Activated CD4-positive, alpha-beta T cell treated with anti-CD3 and anti-CD28 coated beads for 36 hours (primary cell): ENCODE measurements at regions of chr9 and their contacts with region 1.

Region 1: DNA sequence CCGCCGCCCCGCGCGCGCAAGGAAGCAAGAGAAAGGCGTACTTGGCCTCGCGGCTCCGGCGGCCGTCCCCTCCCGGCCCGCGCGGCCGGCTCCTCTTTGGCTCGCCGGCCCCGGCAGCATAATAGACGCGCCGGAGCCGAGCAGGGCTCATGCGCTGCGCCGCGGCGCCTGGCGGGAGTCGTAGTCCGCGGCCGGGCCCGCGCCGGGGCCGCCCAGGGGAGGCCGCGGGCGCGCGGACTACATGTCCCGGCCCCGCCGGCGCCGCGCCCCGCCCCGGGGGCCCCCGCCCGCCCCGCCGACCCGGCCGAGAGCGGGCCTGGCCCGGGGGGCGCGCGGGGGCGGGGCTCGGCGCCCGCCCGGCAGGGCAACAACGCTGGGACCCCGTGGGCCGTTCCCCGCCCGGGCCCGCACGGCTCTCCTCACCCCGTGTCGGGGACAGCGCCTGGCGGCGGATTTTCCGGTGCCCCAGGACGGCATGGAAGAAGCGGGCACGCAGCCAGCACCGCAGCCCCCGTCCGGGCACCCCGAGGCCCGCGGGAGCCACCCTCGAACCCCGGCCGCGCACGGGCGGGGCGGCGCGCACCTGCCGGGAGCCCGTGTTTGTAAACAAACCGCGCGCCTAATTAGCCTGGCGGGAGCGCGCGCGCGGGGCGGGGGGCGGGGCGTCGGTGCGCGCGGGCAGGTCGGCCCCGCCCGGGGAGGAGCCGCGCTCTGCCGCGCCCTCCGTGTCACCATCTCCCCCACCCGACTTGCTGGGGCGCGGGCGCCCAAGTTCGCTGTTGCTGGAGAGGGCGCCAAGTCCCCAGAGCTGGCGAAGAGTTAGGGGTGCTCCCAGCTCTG is at the start of gene BRD3:
- DNase-seq: peak; percentile 91
- ATAC-seq: peak; percentile 85
- H3K4me3 Mint-ChIP-seq: peak within 1 kb of the TSS; percentile 85
- H3K27ac Mint-ChIP-seq: peak within 1 kb of the TSS; percentile 84
- H3K4me1 Mint-ChIP-seq: peaks cover 28% of the 10 kb centered on the region
- H3K27me3 Mint-ChIP-seq: peaks cover 14% of the 10 kb centered on the region
- total RNA-seq, gene BRD3: 33.8 to 39.2 TPM

Region 2: GRCh38 chr9:133030317-133031129 is 1037.6 kb before region 1 on chr9 and contains the start of gene GTF3C5:
- CTCF ChIA-PET with region 1: interaction called, 3 read pairs
- POLR2A ChIA-PET with region 1: no interaction called
- intact Hi-C with region 1: loop called in 1 of 2 experiments (anchors 1 kb)
- DNase-seq: peak; percentile 95
- ATAC-seq: peak; percentile 98
- H3K4me3 Mint-ChIP-seq: peak within 1 kb of the TSS; percentile 94
- H3K27ac Mint-ChIP-seq: peak within 1 kb of the TSS; percentile 95
- H3K4me1 Mint-ChIP-seq: peaks cover 41% of the 10 kb centered on the region
- H3K27me3 Mint-ChIP-seq: no peaks in the 10 kb centered on the region
- total RNA-seq, gene GTF3C5: 81.3 to 84.5 TPM

Region 3: GRCh38 chr9:133356391-133357091 is 711.6 kb before region 1 on chr9 and contains the starts of genes SURF1 and SURF2:
- CTCF ChIA-PET with region 1: no interaction called
- POLR2A ChIA-PET with region 1: no interaction called
- intact Hi-C with region 1: loop called in 1 of 2 experiments (anchors 10 kb)
- DNase-seq: peak; percentile 96
- ATAC-seq: peak; percentile 84
- H3K4me3 Mint-ChIP-seq: peak within 1 kb of the TSS; percentile 91
- H3K27ac Mint-ChIP-seq: peak within 1 kb of the TSS; percentile 85
- H3K4me1 Mint-ChIP-seq: peaks cover 52% of the 10 kb centered on the region
- H3K27me3 Mint-ChIP-seq: no peaks in the 10 kb centered on the region
- total RNA-seq, gene SURF1: 17.4 to 29.1 TPM
- total RNA-seq, gene SURF2: 17.3 to 21.8 TPM

Region 4: GRCh38 chr9:133992780-133993634 is 75.1 kb before region 1 on chr9:
- CTCF ChIA-PET with region 1: no interaction called
- POLR2A ChIA-PET with region 1: no interaction called
- intact Hi-C with region 1: loop called (anchors 1 to 2 kb)
- DNase-seq: peak; percentile 88
- ATAC-seq: peak; percentile 75
- H3K4me3 Mint-ChIP-seq: peak overlapping the region; percentile 61
- H3K27ac Mint-ChIP-seq: no peak overlapping the region
- H3K4me1 Mint-ChIP-seq: peaks cover 2% of the 10 kb centered on the region
- H3K27me3 Mint-ChIP-seq: peaks cover 3% of the 10 kb centered on the region

Region 5: GRCh38 chr9:134044944-134045343 is 23.2 kb before region 1 on chr9:
- CTCF ChIA-PET with region 1: no interaction called
- POLR2A ChIA-PET with region 1: no interaction called
- intact Hi-C with region 1: no loop called
- DNase-seq: no peak
- ATAC-seq: no peak
- H3K4me3 Mint-ChIP-seq: no peak overlapping the region
- H3K27ac Mint-ChIP-seq: no peak overlapping the region
- H3K4me1 Mint-ChIP-seq: no peaks in the 10 kb centered on the region
- H3K27me3 Mint-ChIP-seq: no peaks in the 10 kb centered on the region

Region 6: DNA sequence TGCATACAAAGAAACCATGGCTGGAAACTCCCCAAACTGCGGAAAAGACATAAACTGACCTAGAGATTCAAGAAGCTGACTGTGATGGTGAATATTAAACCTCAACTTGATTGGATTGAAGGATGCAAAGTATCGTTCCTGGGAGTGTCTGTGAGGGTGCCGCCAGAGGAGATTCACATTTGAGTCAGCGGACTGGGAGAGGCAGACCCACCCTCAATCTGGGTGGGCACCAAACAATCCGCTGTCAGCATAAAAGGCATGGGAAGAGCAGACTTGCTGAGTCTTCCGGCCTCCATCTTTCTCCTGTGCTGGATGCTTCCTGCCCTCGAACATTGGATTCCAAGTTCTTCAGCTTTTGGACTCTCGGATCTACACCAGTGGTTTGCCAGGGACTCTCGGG is 42.9 kb after region 1 on chr9:
- CTCF ChIA-PET with region 1: no interaction called
- POLR2A ChIA-PET with region 1: no interaction called
- intact Hi-C with region 1: no loop called
- DNase-seq: no peak
- ATAC-seq: no peak
- H3K4me3 Mint-ChIP-seq: no peak overlapping the region
- H3K27ac Mint-ChIP-seq: no peak overlapping the region
- H3K4me1 Mint-ChIP-seq: no peaks in the 10 kb centered on the region
- H3K27me3 Mint-ChIP-seq: peaks cover 4% of the 10 kb centered on the region

Region 7: DNA sequence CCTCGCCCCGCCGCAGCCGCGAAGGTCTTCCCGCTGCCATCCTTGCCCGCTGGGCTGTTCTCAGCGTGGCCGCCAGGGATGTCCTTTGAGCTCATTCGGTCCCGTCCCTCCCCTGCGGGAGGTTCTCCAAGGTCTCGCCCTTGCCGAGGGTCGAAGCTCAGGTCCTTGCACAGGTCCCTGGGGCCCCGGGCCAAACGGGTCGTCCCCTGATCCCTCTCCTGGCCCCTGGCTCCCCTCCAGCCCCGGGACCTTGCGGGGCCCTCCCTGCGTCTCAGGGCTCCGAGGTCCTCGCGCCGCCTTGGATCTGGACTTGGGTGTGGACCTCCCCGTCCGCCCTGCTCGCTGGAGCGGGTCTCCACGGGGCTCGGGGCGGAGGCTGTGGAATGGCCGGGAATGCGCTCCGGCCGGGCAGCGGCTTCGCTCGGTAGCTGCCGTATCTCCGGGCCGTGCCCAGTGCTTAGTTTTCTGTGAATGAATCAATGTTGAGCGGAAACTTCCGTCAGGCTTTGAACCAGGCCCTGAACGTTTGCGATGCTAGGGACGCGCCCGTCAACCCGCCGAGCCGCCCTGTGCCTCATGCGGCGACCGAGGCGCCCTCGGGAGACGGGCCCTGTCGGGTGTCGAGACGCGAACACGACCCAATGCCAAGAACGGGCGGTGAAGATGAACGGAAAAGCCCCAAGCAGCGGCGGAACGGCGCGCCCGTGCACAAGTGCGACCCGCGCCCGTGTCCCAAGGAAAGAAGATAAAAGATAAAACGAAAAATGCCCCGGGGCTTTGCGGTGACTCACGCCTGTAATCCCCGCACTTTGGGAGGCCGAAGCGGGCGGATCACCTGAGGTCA is 95.5 kb after region 1 on chr9:
- CTCF ChIA-PET with region 1: interaction called, 3 read pairs
- POLR2A ChIA-PET with region 1: interaction called, 3 read pairs
- intact Hi-C with region 1: loop called (anchors 1 to 2 kb)
- DNase-seq: peak; percentile 83
- ATAC-seq: peak; percentile 39
- H3K4me3 Mint-ChIP-seq: no peak overlapping the region
- H3K27ac Mint-ChIP-seq: no peak overlapping the region
- H3K4me1 Mint-ChIP-seq: peaks cover 2% of the 10 kb centered on the region
- H3K27me3 Mint-ChIP-seq: no peaks in the 10 kb centered on the region

Region 8: DNA sequence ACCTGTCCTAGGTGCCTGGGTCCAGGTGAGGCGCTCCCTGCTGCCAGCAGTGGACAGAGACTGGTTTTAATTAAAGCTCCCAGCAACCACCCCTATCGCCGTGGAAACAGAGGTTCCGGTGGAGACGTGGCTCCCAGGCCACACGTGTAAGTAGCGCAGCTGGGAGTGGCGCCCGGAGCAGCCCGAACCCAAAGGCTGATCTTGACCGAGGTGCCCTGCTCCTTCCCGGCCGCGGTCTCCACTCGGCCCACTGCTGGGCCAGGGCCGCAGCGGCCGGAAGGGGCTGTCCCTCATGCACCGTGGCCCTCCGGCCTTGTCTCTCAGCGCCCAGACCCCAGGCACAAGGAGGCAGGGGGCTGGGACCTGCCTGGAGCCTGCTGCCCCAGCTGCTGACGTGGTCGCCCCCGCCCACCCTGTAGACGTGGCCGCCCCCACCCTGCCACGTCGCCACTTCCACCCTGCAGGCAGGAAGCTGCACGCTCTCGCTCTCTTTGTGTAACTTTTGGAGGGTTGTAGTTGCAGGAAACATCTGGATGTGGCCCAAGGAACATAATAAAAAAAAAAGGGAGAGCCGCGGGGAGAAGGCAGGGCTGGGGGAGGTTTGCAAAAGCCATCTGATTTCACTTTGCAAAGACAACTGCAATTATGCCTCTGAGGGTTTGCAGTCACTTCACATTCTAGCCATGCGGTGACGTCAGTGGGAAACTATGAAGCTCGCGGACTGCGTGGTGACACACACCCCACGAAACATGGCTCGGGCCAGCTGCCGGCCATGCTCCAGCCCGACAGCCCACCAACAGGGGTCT is 388.0 kb after region 1 on chr9:
- CTCF ChIA-PET with region 1: no interaction called
- POLR2A ChIA-PET with region 1: no interaction called
- intact Hi-C with region 1: loop called in 1 of 2 experiments (anchors 5 kb)
- DNase-seq: peak; percentile 85
- ATAC-seq: peak; percentile 87
- H3K4me3 Mint-ChIP-seq: peak overlapping the region; percentile 22
- H3K27ac Mint-ChIP-seq: peak overlapping the region; percentile 81
- H3K4me1 Mint-ChIP-seq: peaks cover 15% of the 10 kb centered on the region
- H3K27me3 Mint-ChIP-seq: no peaks in the 10 kb centered on the region